Sigmoid colon (tissue), 7 donors: ENCODE measurements at regions of chr6 and their contacts with region 1.

Region 1: GRCh38 chr6:47787620-47788497 is 6.0 kb downstream of the OPN5 start:
- DNase-seq: peak; percentile 65
- H3K4me3 ChIP-seq: peak overlapping the region in 1 of 4 donors; percentile 11
- H3K27ac ChIP-seq: no peak overlapping the region
- H3K4me1 ChIP-seq: peaks cover 0 to 3% (median 3%) of the 10 kb centered on the region in 4 donors
- H3K27me3 ChIP-seq: peaks cover 0 to 10% (median 0%) of the 10 kb centered on the region in 3 donors
- CTCF ChIP-seq: peak; percentile 20 to 85 (median 58)
- EP300 ChIP-seq: no peak
- POLR2A ChIP-seq: no peak

Region 2: DNA sequence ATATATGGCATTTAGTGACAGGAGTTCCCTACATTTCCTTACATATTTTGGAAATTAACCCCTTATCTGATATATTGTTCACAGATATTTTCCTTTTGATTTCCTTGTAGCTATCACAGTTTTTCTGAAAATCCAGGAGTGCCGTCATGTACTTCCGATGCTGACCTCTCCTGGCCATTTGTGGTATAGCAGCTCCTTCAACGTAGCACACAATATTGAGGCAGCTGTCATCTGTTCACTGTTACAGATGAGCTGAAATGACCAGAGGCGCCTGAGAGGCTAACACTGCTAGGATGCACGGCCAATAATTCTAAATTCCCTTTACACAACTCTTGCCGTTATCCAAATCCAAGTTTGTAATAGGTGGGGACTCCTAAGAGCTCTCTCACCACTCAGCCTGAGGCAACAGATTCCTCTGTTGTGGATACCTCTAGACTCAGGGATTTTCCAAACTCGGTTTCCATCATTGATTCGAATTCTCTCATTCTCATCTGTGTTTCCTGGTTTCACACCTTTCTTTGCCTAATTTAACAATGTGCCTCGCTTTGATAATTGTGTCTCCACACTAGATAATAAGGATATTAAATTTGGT is 1622.2 kb after region 1 on chr6:
- intact Hi-C with region 1: loop called (anchors 5 kb)
- DNase-seq: peak; percentile 67
- H3K4me3 ChIP-seq: no peak overlapping the region
- H3K27ac ChIP-seq: no peak overlapping the region
- H3K4me1 ChIP-seq: no peaks in the 10 kb centered on the region
- H3K27me3 ChIP-seq: no peaks in the 10 kb centered on the region
- CTCF ChIP-seq: peak in 3 of 4 experiments; percentile 54 to 88 (median 73)
- EP300 ChIP-seq: no peak
- POLR2A ChIP-seq: no peak